Psoas muscle (tissue), 8 donors: ENCODE measurements at regions of chr2 and their contacts with region 1.

Region 1: GRCh38 chr2:16773080-16773713 is 107.6 kb upstream of the CYRIA start:
- DNase-seq: no peak
- ATAC-seq: peak in 3 of 4 donors; percentile 48 to 75 (median 64)
- H3K4me3 ChIP-seq: no peak overlapping the region
- H3K27ac ChIP-seq: no peak overlapping the region
- H3K4me1 ChIP-seq: no peaks in the 10 kb centered on the region
- H3K27me3 ChIP-seq: peaks cover 0 to 6% (median 3%) of the 10 kb centered on the region in 3 donors
- CTCF ChIP-seq: peak; percentile 47

Region 2: GRCh38 chr2:16739778-16740581 is 33.2 kb before region 1 on chr2:
- intact Hi-C with region 1: no loop called
- DNase-seq: peak in 1 of 2 donors; percentile 66
- ATAC-seq: peak; percentile 89 to 95 (median 94)
- H3K4me3 ChIP-seq: no peak overlapping the region
- H3K27ac ChIP-seq: peak overlapping the region; percentile 39
- H3K4me1 ChIP-seq: peaks cover 13% of the 10 kb centered on the region
- H3K27me3 ChIP-seq: no peaks in the 10 kb centered on the region
- CTCF ChIP-seq: no peak

Region 3: GRCh38 chr2:16756831-16757644 is 16.2 kb before region 1 on chr2:
- intact Hi-C with region 1: no loop called
- DNase-seq: peak; percentile 77 to 90
- ATAC-seq: peak; percentile 92 to 97 (median 93)
- H3K4me3 ChIP-seq: no peak overlapping the region
- H3K27ac ChIP-seq: peak overlapping the region; percentile 0
- H3K4me1 ChIP-seq: no peaks in the 10 kb centered on the region
- H3K27me3 ChIP-seq: no peaks in the 10 kb centered on the region
- CTCF ChIP-seq: peak; percentile 95

Region 4: DNA sequence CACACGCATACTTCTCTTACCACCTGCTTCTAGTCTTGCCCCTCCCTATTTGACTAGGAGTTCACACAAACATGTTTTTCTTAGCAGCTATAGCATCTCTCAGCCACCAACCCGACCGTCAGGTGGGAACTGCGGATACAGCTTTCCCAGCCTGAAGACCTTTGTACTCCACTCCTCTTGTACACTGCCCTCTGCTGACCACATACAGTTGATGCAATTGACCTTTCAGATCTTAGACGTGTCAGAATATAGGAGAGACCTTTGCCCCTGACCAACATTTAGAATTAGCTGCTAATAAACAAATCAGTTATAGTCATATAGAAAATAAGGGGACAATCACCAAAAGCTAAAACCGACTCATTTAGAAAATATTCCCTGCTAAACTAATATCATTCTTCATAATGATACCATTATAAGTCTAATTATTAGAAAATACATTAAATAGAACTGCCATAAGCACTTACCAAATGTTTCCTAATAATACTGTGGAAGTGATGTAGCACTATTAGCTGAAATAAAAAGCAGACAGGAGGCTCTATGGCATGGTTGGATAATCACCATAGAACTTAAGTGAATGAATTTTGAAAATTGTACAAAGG is 536.6 kb after region 1 on chr2:
- intact Hi-C with region 1: loop called (anchors 5 kb)
- DNase-seq: no peak
- ATAC-seq: peak in 1 of 4 donors; percentile 58
- H3K4me3 ChIP-seq: no peak overlapping the region
- H3K27ac ChIP-seq: no peak overlapping the region
- H3K4me1 ChIP-seq: no peaks in the 10 kb centered on the region
- H3K27me3 ChIP-seq: no peaks in the 10 kb centered on the region
- CTCF ChIP-seq: peak; percentile 48

Region 5: GRCh38 chr2:17658251-17658843 is 885.1 kb after region 1 on chr2:
- intact Hi-C with region 1: loop called in 1 of 2 experiments (anchors 10 kb)
- DNase-seq: no peak
- ATAC-seq: peak in 2 of 4 donors; percentile 40 to 51
- H3K4me3 ChIP-seq: no peak overlapping the region
- H3K27ac ChIP-seq: no peak overlapping the region
- H3K4me1 ChIP-seq: no peaks in the 10 kb centered on the region
- H3K27me3 ChIP-seq: no peaks in the 10 kb centered on the region
- CTCF ChIP-seq: no peak